ENCODE measurements at regions of chr1 and their contacts with region 1.

Region 1: DNA sequence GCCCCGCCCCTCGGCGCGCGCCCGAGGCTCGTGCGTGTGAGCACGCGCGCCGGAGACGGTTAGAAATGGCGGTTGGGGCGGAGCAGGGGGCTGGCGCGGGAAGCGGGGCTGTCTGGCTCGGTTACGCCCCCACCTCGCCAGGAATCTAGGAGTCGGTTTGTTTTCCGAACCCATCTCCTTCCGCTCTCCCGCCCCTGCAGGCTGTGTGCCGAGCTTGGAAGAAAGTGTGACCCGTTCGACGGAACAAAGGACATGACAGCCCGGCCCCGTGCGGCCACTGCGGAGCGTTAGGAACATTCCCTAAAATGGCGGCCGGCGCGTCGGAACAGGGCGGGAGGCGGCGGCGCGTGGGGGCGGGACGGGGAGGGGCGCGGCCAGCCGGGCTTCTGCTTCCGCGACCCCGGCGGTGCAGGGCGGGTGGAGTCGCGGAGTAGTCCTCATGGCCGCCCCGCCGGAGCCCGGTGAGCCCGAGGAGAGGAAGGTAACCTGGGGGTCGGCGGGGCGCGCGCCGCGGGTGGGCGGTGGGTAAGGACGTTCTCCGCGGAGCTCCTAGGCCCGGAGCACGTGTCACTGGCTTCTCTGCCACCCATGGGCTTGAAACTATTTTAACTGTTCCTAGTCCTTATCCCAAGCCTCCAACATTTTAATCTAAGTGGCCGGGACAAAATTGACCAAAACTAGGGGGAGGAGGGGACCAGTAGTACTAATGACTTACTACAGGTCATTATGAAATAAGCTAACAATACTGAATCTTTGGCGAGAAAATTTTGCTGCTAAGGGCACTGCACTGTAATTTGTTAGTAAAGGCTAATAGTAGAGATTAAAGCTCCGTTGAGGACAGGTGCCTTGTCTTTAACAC is at the start of gene COX20:
- DNase-seq: no peak
- H3K4me3 ChIP-seq: peak within 1 kb of the TSS; percentile 73
- CTCF ChIP-seq: no peak

Region 2: GRCh38 chr1:244864253-244865027 is 28.9 kb after region 1 on chr1 and contains the start of gene HNRNPU:
- CTCF ChIA-PET with region 1: interaction called, 4 read pairs
- POLR2A ChIA-PET with region 1: interaction called, 16 read pairs
- DNase-seq: peak; percentile 73
- H3K4me3 ChIP-seq: peak within 1 kb of the TSS; percentile 95
- CTCF ChIP-seq: peak; percentile 30

Measured in AG04449 (cell line).